ENCODE measurements at regions of chr17 and their contacts with region 1.

Region 1: DNA sequence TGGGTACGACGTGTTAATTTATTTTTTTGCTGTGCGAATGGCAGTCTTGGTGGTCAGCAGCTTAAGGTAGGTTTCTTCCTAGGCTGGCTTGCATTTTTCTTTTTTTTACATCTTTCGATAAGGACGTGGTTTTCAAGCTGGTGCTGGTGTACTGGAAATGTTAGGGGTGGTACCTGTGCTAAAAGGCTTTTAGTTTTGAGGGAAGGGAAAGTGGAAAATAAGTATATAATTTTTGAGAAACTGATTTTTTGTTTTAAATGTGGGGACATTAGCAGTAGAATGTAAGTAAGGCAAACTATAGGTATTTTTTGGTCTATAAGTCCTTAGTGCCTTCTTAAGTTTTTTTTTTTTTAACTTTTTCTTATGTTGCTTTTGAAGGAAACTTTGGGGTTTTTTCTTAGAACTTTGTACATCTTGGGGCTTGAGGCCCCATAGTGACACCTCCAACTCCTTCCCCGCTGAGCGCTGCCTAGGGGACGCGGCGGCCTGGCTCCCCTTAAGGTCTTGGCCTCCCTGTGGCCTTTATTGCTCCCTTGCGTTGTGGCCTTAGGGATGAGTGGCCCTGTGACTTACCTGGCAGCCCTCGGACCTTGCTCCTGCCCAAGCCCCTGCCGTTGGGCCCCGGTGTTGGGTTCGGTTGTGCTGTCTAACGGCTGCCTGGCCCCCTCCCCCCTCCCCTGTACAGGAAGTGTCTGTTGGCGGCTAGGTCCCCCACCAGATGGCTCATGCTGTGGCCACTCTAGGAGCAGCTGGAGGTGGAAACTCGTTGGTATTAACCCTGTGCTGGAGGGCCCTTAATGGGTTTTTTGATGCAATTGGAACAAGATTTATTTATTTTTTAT is 88.0 kb upstream of the RPRML start:
- DNase-seq: peak; percentile 61
- ATAC-seq: peak; percentile 99
- H3K4me3 Mint-ChIP-seq: peak overlapping the region; percentile 96
- H3K27ac Mint-ChIP-seq: peak overlapping the region; percentile 95
- H3K4me1 Mint-ChIP-seq: peaks cover 35% of the 10 kb centered on the region
- H3K27me3 Mint-ChIP-seq: no peaks in the 10 kb centered on the region
- CTCF ChIP-seq: no peak

Region 2: GRCh38 chr17:46851029-46851741 is 215.9 kb before region 1 on chr17 and contains the start of gene WNT9B:
- CTCF ChIA-PET with region 1: no interaction called
- POLR2A ChIA-PET with region 1: no interaction called
- intact Hi-C with region 1: no loop called
- DNase-seq: no peak
- ATAC-seq: peak; percentile 37
- H3K4me3 Mint-ChIP-seq: peak within 1 kb of the TSS; percentile 73
- H3K27ac Mint-ChIP-seq: no peak within 1 kb of the TSS
- H3K4me1 Mint-ChIP-seq: peaks cover 16% of the 10 kb centered on the region
- H3K27me3 Mint-ChIP-seq: peaks cover 69% of the 10 kb centered on the region
- CTCF ChIP-seq: no peak
- total RNA-seq, gene WNT9B: not detected in 2 replicates

Region 3: DNA sequence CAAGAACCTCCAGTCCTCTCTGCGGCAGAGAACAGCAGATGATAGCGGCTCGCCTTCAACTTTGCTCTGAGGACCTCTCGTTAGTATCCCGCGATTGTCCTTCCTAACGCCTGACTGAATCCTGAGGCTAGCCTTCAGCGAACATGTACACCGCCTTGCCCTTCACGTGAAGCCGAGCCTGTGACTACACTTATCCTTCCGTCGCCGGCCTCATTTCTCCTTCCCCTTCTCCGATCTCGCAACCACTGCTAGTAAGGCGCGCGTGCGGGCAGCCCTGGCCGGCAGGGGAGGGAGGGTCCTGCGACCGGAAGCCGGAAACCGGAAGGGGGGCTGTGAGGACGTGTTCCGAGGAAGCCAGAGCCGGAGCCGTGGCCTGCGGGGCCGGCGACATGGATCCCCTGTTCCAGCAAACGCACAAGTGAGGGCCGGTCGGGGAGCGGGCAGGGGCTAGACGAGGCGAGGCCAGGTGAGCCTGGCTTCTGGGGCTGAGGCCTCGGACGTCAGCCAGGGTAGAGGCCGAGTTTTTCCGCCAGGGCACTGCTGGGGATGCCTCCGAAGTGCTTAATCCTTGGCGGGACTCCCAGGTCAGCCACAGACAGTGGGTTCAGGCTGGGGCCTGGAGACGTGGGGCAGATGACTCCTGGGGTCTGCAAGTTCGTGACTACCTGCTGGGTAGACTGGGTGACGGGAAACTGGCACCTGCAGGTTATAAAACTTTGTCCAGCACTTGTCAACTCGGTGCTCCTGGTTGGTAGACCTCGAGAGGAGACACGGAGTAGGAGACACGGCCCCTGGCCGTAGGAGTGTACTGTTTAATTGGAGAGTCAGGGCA is 144.0 kb before region 1 on chr17 and contains the start of gene GOSR2:
- CTCF ChIA-PET with region 1: no interaction called
- POLR2A ChIA-PET with region 1: no interaction called
- intact Hi-C with region 1: loop called (anchors 1 kb)
- DNase-seq: peak; percentile 93
- ATAC-seq: peak; percentile 95
- H3K4me3 Mint-ChIP-seq: peak within 1 kb of the TSS; percentile 91
- H3K27ac Mint-ChIP-seq: peak within 1 kb of the TSS; percentile 100
- H3K4me1 Mint-ChIP-seq: peaks cover 49% of the 10 kb centered on the region
- H3K27me3 Mint-ChIP-seq: peaks cover 2% of the 10 kb centered on the region
- CTCF ChIP-seq: no peak
- total RNA-seq, gene GOSR2: 64.7 and 78.0 TPM in 2 replicates

Region 4: DNA sequence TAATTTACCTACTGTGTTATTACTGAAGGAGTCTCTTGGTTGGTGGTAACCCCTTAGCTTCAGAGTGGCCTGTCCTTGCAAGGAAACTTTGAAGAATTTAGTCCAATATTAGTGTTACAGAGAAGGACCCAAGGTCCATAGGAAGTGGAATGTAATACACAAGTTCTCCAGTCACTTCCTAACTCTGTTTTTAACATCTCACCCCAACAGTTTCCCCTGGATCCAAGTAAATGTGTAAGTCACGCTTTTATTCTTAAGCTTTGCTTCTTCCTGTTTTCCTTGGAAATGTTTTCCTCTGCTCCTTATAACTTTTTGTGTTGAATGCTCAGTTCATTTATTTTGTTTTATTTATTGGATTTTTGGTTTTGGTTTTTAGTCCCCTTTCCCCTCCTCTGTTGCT is 62.2 kb before region 1 on chr17:
- CTCF ChIA-PET with region 1: no interaction called
- POLR2A ChIA-PET with region 1: no interaction called
- intact Hi-C with region 1: loop called (anchors 5 kb)
- DNase-seq: no peak
- ATAC-seq: no peak
- H3K4me3 Mint-ChIP-seq: no peak overlapping the region
- H3K27ac Mint-ChIP-seq: no peak overlapping the region
- H3K4me1 Mint-ChIP-seq: peaks cover 11% of the 10 kb centered on the region
- H3K27me3 Mint-ChIP-seq: no peaks in the 10 kb centered on the region
- CTCF ChIP-seq: no peak

Region 5: DNA sequence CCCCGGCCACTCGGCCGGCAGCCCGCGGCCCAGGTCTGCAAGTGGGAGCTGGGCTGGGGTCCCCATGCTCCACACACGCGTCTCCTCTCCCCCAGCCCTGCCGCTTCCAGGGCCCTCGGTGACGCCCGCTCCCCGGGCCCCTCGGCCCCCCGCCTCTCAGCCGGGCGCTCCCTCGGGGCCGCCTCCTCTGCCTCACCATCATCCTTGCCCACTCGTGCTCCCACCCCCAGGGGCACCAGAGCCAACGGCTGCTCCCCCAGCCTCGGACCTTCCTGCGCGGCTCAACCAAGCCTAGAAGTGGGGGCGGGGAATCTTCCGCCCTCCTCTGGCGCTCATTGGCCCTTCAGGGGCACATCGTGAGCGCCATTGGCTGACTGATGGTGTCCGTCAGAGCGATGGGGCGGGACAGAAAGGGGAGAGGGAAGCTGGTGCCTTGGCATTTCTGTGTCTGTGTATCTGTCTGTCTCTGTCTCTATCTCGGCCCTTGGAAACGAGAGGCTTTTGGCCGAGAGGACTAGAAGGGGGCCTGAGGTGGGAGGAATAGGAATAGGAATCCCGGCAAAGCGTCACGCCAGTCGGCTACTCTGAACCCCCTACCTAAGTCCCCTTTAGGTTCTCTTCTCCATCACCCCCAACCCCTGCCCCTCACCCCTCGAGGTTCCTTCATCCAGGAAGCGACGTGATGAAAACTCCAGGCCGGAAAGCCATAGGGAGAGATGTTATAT is 33.1 kb after region 1 on chr17:
- CTCF ChIA-PET with region 1: no interaction called
- POLR2A ChIA-PET with region 1: interaction called, 7 read pairs
- intact Hi-C with region 1: loop called (anchors 2 kb)
- DNase-seq: peak; percentile 85
- ATAC-seq: peak; percentile 98
- H3K4me3 Mint-ChIP-seq: peak overlapping the region; percentile 98
- H3K27ac Mint-ChIP-seq: peak overlapping the region; percentile 95
- H3K4me1 Mint-ChIP-seq: peaks cover 40% of the 10 kb centered on the region
- H3K27me3 Mint-ChIP-seq: no peaks in the 10 kb centered on the region
- CTCF ChIP-seq: no peak

Region 6: GRCh38 chr17:47162013-47162622 is 95.1 kb after region 1 on chr17:
- CTCF ChIA-PET with region 1: no interaction called
- POLR2A ChIA-PET with region 1: no interaction called
- intact Hi-C with region 1: no loop called
- DNase-seq: no peak
- ATAC-seq: no peak
- H3K4me3 Mint-ChIP-seq: peak overlapping the region; percentile 67
- H3K27ac Mint-ChIP-seq: peak overlapping the region; percentile 92
- H3K4me1 Mint-ChIP-seq: peaks cover 32% of the 10 kb centered on the region
- H3K27me3 Mint-ChIP-seq: no peaks in the 10 kb centered on the region
- CTCF ChIP-seq: no peak